ENCODE measurements at regions of chr12 and their contacts with region 1.

Region 1: DNA sequence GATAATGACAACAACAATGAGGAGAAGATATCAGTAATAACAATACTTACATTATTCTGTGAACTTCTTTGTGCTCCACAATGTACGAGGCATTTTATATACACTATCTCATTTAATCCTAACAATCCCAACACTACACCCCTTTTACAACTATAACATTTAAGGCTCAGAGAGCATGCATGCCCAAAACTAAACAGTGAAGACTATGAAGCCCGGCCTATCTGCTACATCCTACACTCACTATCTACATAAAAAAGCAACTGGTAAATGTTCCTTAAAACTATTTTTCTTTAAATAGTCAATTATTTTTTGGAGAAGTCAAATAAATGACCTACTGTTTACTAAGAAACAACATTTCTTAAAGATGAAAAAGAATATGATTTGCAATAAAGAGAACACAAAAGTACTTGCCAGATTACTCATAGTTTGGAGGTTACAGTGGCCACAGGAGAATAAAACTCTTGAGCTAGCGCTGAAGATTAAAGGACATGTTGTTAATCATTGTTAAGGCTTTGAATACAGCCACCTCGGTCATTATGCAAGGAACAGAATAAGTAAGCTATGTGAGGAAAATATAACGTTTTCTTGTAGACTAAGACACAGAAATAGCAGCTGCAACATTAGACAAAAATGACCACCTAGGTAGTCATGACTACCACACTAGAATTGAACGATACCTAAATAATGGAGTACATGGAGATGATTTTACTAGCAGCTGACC is 56.7 kb downstream of the EPS8 start:
- DNase-seq: peak; percentile 57
- ATAC-seq: peak; percentile 84
- H3K4me3 ChIP-seq: no peak overlapping the region
- H3K27ac ChIP-seq: no peak overlapping the region
- H3K4me1 ChIP-seq: no peaks in the 10 kb centered on the region
- H3K27me3 ChIP-seq: no peaks in the 10 kb centered on the region
- CTCF ChIP-seq: no peak
- EP300 ChIP-seq: peak; percentile 56 to 74; a peak in 3 of 4 replicates
- POLR2A ChIP-seq: no peak
- RAD21 ChIP-seq: no peak

Region 2: DNA sequence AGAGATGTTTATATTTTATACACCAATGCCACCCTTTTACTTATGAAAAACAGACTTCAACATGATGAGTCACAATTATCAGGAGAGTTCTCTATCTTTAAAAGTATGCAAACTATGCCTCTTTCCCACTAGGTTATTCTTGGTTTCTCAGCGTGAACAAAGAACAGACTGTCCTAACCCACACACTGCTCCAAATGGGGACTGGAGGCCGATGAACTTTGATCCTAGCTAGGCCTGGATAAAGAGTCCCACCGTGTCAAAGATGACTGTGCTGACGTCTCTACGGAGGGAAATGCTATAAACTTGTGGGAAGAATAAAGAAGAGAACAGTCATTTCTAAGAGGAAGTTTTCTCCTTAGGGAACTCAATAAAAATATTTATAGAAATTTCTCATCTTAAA is 103.4 kb before region 1 on chr12:
- CTCF ChIA-PET with region 1: interaction called, 3 read pairs
- POLR2A ChIA-PET with region 1: no interaction called
- RAD21 ChIA-PET with region 1: interaction called, 8 read pairs
- SMC1A ChIA-PET with region 1: interaction called, 12 read pairs
- in situ Hi-C with region 1: no loop called
- intact Hi-C with region 1: no loop called
- DNase-seq: peak; percentile 46
- ATAC-seq: peak; percentile 91
- H3K4me3 ChIP-seq: no peak overlapping the region
- H3K27ac ChIP-seq: no peak overlapping the region
- H3K4me1 ChIP-seq: no peaks in the 10 kb centered on the region
- H3K27me3 ChIP-seq: no peaks in the 10 kb centered on the region
- CTCF ChIP-seq: no peak
- EP300 ChIP-seq: peak; percentile 73 to 78; a peak in 3 of 4 replicates
- POLR2A ChIP-seq: no peak
- RAD21 ChIP-seq: no peak

Region 3: DNA sequence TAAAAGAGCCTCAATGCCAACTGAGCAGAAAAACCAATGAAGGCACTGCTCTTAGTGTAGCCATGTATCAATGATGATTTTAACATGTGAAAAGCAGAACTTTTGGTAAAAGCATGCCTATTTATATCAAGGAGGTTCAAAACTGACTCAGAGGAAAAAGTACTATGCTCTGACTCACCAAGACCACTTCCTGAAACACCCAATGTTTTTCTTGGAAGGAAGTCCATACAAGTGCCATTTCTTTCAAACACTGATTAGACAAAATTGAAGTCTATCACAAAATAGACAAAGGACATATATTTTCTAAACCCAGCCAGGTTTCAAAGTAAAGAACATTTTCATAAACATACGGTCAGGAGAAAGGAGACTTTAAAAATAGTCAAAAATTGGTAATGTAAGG is 31.9 kb before region 1 on chr12:
- CTCF ChIA-PET with region 1: interaction called, 3 read pairs
- POLR2A ChIA-PET with region 1: interaction called, 5 read pairs
- RAD21 ChIA-PET with region 1: interaction called, 3 read pairs
- SMC1A ChIA-PET with region 1: interaction called, 10 read pairs
- in situ Hi-C with region 1: no loop called
- intact Hi-C with region 1: loop called (anchors 2 kb)
- DNase-seq: peak; percentile 46
- ATAC-seq: peak; percentile 83
- H3K4me3 ChIP-seq: no peak overlapping the region
- H3K27ac ChIP-seq: no peak overlapping the region
- H3K4me1 ChIP-seq: no peaks in the 10 kb centered on the region
- H3K27me3 ChIP-seq: no peaks in the 10 kb centered on the region
- CTCF ChIP-seq: no peak
- EP300 ChIP-seq: peak; percentile 13 to 51; a peak in 1 of 4 replicates
- POLR2A ChIP-seq: no peak
- RAD21 ChIP-seq: no peak

Region 4: GRCh38 chr12:15712823-15713660 is 19.5 kb before region 1 on chr12:
- CTCF ChIA-PET with region 1: interaction called, 12 read pairs
- POLR2A ChIA-PET with region 1: interaction called, 12 read pairs
- RAD21 ChIA-PET with region 1: interaction called, 44 read pairs
- SMC1A ChIA-PET with region 1: interaction called, 213 read pairs
- in situ Hi-C with region 1: no loop called
- intact Hi-C with region 1: no loop called
- DNase-seq: no peak
- ATAC-seq: peak; percentile 33
- H3K4me3 ChIP-seq: no peak overlapping the region
- H3K27ac ChIP-seq: no peak overlapping the region
- H3K4me1 ChIP-seq: no peaks in the 10 kb centered on the region
- H3K27me3 ChIP-seq: no peaks in the 10 kb centered on the region
- CTCF ChIP-seq: no peak
- EP300 ChIP-seq: no peak
- POLR2A ChIP-seq: no peak
- RAD21 ChIP-seq: no peak

Region 5: GRCh38 chr12:15751741-15752140 is 19.2 kb after region 1 on chr12:
- CTCF ChIA-PET with region 1: interaction called, 33 read pairs
- POLR2A ChIA-PET with region 1: interaction called, 28 read pairs
- RAD21 ChIA-PET with region 1: interaction called, 19 read pairs
- SMC1A ChIA-PET with region 1: interaction called, 198 read pairs
- in situ Hi-C with region 1: no loop called
- intact Hi-C with region 1: no loop called
- DNase-seq: no peak
- ATAC-seq: no peak
- H3K4me3 ChIP-seq: no peak overlapping the region
- H3K27ac ChIP-seq: no peak overlapping the region
- H3K4me1 ChIP-seq: no peaks in the 10 kb centered on the region
- H3K27me3 ChIP-seq: no peaks in the 10 kb centered on the region
- CTCF ChIP-seq: no peak
- EP300 ChIP-seq: no peak
- POLR2A ChIP-seq: no peak
- RAD21 ChIP-seq: no peak

Region 6: DNA sequence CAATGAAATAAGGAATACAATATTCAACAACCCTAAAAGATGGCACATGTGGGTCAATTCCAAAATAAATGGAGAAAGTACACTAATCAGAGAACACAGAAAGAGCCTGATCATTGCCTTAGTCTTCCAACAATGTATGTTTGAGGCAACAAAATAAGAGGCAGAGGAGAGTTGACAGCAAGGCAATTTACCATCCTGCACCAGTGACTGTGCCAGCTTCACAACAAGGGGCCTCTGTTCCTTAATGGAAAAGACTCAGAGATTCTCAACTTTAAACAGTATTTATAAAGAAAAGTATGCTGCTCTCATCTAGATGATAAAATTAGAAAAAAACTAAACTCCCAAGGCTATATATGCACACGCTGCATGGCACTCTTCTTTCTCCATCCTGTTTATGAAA is 30.8 kb after region 1 on chr12:
- CTCF ChIA-PET with region 1: interaction called, 6 read pairs
- POLR2A ChIA-PET with region 1: interaction called, 7 read pairs
- RAD21 ChIA-PET with region 1: interaction called, 12 read pairs
- SMC1A ChIA-PET with region 1: interaction called, 198 read pairs
- in situ Hi-C with region 1: no loop called
- intact Hi-C with region 1: no loop called
- DNase-seq: no peak
- ATAC-seq: no peak
- H3K4me3 ChIP-seq: no peak overlapping the region
- H3K27ac ChIP-seq: no peak overlapping the region
- H3K4me1 ChIP-seq: no peaks in the 10 kb centered on the region
- H3K27me3 ChIP-seq: no peaks in the 10 kb centered on the region
- CTCF ChIP-seq: no peak
- EP300 ChIP-seq: no peak
- POLR2A ChIP-seq: no peak
- RAD21 ChIP-seq: no peak

Region 7: GRCh38 chr12:15778126-15778525 is 45.6 kb after region 1 on chr12:
- CTCF ChIA-PET with region 1: interaction called, 30 read pairs
- POLR2A ChIA-PET with region 1: interaction called, 48 read pairs
- RAD21 ChIA-PET with region 1: interaction called, 52 read pairs
- SMC1A ChIA-PET with region 1: interaction called, 111 read pairs
- in situ Hi-C with region 1: no loop called
- intact Hi-C with region 1: no loop called
- DNase-seq: no peak
- ATAC-seq: peak; percentile 26
- H3K4me3 ChIP-seq: no peak overlapping the region
- H3K27ac ChIP-seq: no peak overlapping the region
- H3K4me1 ChIP-seq: no peaks in the 10 kb centered on the region
- H3K27me3 ChIP-seq: no peaks in the 10 kb centered on the region
- CTCF ChIP-seq: no peak
- EP300 ChIP-seq: no peak
- POLR2A ChIP-seq: no peak
- RAD21 ChIP-seq: no peak